HEK293 (cell line): ENCODE measurements at regions of chr19 and their contacts with region 1.

Region 1: DNA sequence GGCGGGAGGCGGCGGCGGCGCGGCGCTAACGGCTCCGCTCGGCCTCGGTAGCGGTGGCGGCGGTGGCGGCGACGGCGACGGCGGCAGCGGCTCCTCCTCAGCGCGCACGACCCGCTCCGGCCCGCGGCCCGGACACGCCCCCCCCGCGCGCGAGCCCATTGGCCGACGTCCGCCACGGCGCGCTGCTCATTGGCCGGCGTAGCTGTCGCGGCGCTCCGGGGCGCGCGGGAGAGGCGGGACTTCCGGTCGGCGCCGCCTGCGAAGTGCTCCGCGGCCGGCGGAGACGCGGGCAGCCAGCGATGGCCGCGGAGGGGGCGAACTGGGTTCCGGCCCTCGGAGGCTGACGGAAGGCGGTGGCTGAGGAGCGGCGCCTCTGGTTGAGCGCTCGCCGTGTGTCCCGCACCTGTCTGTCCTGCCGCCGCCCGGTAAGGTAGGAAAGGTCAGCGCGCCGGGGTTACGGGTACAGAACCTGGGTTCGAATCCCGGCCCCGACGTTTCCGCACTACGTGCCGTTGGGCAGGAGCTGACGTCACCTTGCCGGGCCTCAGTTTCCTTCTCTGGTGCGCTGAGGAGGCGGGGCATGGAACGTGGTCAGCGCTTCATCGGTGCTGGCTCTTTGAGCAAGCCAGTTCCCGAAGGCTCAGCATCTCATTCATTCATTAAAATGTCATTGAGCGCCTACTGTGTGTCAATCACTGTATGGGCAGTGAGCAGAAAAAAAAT is at the start of gene ELAVL1:
- H3K4me3 ChIP-seq: peak within 1 kb of the TSS; percentile 100
- H3K27ac ChIP-seq: peak within 1 kb of the TSS; percentile 85
- H3K4me1 ChIP-seq: peaks cover 9% of the 10 kb centered on the region
- CTCF ChIP-seq: 0 out of 2 replicates have a peak, but pooled peaks have one; percentile 44

Region 2: DNA sequence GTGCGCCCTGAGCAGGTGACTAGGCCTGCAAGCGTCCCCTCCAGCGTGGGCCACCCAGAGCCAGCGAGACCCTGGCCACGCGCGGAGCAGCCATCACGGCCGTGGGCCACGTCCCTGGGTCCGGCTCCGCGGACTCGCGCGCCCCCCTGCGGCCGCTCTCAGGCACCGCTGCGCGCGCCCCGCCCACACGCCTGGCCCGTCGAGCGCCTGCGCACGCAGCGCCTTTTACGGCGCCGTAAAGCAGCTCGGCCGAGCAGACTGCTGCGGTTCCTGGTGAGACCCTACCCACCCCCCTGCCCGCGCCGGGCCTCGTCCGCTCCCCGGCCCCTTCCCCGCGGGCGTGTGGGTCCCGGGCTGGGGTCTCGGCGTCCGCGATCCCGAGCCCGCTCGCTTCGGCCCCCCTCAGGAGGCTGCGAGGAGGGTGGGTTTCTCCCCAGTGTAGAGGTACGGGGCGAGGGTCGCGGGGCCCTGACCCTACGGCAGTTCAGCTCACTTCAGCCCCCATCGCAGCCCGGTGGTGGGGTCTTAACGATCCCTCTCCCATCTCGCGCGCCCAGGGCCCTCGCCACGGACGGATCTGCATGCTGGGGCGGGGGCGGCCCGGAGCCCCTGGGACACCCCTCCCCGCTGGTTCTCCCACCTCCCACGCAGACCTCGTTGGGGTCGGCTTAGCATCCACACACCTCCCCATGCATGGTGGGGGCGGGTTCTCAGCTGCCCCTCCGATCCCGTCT is 324.9 kb before region 1 on chr19 and contains the start of gene TRAPPC5:
- CTCF ChIA-PET with region 1: no interaction called
- POLR2A ChIA-PET with region 1: no interaction called
- H3K4me3 ChIP-seq: peak within 1 kb of the TSS; percentile 91
- H3K27ac ChIP-seq: peak within 1 kb of the TSS; percentile 79; the same call in 1 of the 2 replicates
- H3K4me1 ChIP-seq: no peaks in the 10 kb centered on the region
- CTCF ChIP-seq: peak; percentile 75

Region 3: DNA sequence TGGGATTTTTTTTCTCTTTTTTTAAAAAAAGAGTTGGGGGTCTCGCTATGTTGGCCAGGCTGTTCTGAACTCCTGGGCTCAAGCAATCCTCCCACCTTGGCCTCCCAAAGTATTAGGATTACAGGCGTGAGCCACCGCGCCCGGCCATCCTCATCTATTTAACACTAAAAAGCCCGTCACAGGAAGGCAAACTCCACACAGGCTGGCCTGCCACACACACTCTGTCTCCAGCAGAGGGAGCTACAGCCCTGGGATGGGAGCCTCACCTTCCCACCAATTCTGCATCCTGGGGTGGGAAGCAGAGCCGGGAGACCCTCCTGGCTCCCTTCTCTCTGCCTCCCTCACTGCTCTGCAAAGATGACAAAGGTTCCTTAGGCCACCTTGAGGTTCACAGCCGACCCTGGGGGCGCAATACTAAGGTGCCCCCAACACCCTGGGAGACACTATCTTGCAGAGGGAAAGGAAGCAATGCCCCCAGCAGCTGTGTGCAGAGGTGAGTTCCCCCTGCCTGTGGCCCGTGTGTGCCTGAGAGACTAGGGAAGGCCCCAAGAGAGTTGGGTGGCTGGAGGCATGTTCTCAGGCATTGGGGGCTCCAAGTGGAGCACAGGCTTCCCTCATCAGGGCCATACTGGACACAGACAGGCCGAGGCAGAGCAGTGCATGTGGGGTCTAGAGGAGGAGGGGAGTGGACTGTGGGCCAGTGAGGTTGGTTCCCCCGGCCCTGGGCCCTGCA is 34.8 kb before region 1 on chr19:
- CTCF ChIA-PET with region 1: interaction called, 18 read pairs
- POLR2A ChIA-PET with region 1: interaction called, 4 read pairs
- H3K4me3 ChIP-seq: no peak overlapping the region
- H3K27ac ChIP-seq: no peak overlapping the region
- H3K4me1 ChIP-seq: no peaks in the 10 kb centered on the region
- CTCF ChIP-seq: peak; percentile 68

Region 4: GRCh38 chr19:7989071-7989575 is 16.6 kb before region 1 on chr19:
- CTCF ChIA-PET with region 1: interaction called, 20 read pairs
- POLR2A ChIA-PET with region 1: interaction called, 5 read pairs
- H3K4me3 ChIP-seq: no peak overlapping the region
- H3K27ac ChIP-seq: no peak overlapping the region
- H3K4me1 ChIP-seq: no peaks in the 10 kb centered on the region; the same call in 1 of the 2 replicates
- CTCF ChIP-seq: no peak

Region 5: GRCh38 chr19:8017808-8018207 is 12.1 kb after region 1 on chr19:
- CTCF ChIA-PET with region 1: interaction called, 12 read pairs
- POLR2A ChIA-PET with region 1: interaction called, 4 read pairs
- H3K4me3 ChIP-seq: no peak overlapping the region
- H3K27ac ChIP-seq: no peak overlapping the region
- H3K4me1 ChIP-seq: no peaks in the 10 kb centered on the region
- CTCF ChIP-seq: no peak

Region 6: DNA sequence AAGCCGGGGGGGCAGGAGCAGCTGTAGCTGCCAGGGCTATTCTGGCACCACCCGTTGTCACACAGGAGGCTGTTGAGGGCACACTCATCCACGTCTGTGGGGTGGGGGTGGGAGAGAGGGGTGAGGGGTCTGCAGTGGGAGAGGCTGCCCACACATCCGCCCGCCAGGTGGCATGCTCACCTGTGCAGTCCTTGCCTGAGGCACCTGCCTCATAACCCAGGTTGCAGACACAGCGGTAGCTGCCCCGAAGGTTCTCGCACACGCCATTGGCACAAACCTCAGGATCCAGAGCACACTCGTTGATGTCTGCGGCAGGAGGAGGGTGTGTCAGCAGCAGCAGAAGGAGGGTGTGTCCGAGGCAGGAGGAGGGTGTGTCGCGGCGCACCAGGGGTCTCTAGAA is 123.4 kb after region 1 on chr19:
- CTCF ChIA-PET with region 1: no interaction called
- POLR2A ChIA-PET with region 1: no interaction called
- H3K4me3 ChIP-seq: no peak overlapping the region
- H3K27ac ChIP-seq: no peak overlapping the region
- H3K4me1 ChIP-seq: peaks cover 2% of the 10 kb centered on the region; the same call in 1 of the 2 replicates
- CTCF ChIP-seq: no peak